ENCODE measurements at regions of chr3 and their contacts with region 1.

Region 1: DNA sequence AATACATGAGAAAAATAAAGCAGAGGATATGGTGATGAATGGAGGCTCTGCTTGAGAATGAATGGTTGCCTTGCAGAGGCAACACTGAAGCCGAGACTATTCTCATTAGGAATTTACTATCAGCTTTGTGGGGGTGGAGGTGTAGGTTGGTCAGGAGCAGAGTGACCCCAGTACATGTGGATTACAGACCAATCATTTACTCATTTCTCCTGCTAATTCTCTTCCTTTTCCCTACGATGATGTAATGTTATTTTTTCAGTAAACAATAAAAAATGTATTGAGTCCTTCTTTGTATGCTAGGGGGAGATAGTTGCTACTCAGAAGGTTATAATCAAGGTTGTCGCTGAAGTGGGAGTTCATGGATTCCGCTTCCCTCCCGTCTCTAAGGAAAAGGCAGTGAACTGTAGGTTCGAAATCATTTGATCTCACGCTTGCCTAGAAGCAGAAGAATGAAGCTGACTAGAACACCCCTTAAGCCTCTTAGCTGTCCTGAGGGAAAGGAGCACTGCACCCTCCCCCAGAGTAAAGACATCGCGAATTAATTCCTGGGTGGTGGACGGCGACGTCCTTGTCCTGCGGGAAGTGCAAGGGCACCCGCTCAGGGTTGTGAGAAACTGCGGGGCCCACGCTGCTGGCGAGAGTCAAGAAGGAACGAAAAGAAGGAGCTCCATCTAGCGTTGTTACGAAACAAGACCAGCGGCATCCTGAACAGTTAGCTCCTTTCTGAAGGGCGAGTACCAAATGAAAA is 213.2 kb upstream of the PFN2 start:
- DNase-seq: no peak
- H3K4me3 ChIP-seq: peak overlapping the region; percentile 34
- H3K27me3 ChIP-seq: no peaks in the 10 kb centered on the region
- CTCF ChIP-seq: peak; percentile 77

Region 2: DNA sequence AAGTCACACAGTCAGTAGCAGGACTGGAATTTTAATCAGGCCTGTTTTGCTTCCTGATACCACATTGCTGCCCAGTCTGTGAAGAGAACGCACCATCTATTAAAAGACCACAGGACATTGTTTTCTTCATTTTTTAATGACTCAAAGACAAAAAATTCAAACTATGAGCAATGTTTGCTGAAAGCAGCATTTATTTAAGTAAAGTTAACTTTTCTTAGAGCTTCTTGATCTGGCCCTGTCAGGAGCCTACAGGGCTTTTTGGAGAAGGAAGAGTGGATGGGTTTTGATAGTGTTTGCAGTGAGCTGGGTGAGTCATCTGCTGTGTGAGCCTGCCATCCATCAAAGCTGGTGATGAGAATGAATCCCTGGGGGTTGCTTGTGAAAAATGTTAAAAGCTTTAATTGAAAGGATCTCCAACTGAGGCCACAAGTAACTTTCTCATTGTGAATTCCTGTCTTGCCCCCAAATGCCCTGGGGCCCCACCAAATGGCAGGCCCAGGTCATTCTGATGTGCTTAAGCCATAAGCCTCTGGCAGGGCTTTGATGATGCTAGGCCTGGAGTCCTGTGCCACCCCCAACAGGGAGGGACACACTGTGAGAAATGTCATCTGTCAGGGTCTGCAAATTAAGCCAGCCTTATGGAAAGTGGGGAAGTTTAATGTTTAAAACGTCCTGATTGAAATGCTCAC is 77.0 kb before region 1 on chr3:
- CTCF ChIA-PET with region 1: interaction called, 10 read pairs
- POLR2A ChIA-PET with region 1: no interaction called
- DNase-seq: peak; percentile 86
- H3K4me3 ChIP-seq: no peak overlapping the region
- H3K27me3 ChIP-seq: no peaks in the 10 kb centered on the region
- CTCF ChIP-seq: no peak

Region 3: DNA sequence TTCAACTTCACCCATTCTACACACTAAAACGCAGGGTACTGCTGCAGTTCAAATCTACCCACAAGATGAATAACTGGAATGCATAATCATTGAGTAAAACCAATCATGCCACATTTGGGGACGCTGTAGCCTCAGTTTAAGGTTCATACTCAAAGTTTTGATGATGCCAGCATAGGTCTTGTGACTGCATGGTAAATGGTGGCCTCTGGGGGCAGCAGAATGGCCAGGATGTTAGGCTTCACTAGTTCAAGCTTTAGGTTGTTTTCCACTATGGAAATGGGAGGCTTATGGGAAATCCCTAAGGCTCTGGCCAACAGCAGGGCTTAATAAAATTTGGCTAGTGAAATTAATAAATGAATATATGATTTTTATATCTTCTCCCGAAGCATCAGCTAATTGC is 119.9 kb after region 1 on chr3:
- CTCF ChIA-PET with region 1: no interaction called
- POLR2A ChIA-PET with region 1: no interaction called
- DNase-seq: no peak
- H3K4me3 ChIP-seq: no peak overlapping the region
- H3K27me3 ChIP-seq: no peaks in the 10 kb centered on the region
- CTCF ChIP-seq: no peak

Measured in BJ (cell line).